AG04449 (cell line): ENCODE measurements at regions of chr10 and their contacts with region 1.

Region 1: GRCh38 chr10:113704637-113705343 is 25.1 kb downstream of the CASP7 start:
- DNase-seq: no peak
- H3K4me3 ChIP-seq: no peak overlapping the region
- CTCF ChIP-seq: peak; percentile 63

Region 2: DNA sequence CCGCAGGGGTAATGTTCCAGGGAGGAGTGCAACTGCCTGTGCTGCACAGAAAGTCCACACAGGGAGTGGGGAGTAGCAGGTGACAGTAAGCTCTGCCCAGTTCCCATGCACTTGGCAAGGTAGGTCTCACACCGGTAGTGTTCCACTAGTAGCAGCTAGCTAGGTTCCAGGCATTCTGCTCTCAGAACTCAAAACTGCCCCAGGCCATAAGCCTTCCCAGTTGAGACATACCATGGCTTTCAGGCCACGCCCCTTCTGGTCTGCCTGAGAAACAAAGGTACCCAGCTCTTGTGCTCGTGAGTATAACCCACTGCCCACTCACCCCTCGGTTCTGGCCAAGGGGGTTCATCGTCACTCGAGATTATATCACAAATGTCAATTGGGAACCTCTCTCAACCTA is 12.5 kb before region 1 on chr10:
- CTCF ChIA-PET with region 1: interaction called, 10 read pairs
- POLR2A ChIA-PET with region 1: no interaction called
- DNase-seq: no peak
- H3K4me3 ChIP-seq: no peak overlapping the region
- CTCF ChIP-seq: no peak

Region 3: GRCh38 chr10:113843972-113844485 is 139.2 kb after region 1 on chr10:
- CTCF ChIA-PET with region 1: no interaction called
- POLR2A ChIA-PET with region 1: no interaction called
- DNase-seq: no peak
- H3K4me3 ChIP-seq: no peak overlapping the region
- CTCF ChIP-seq: no peak